ENCODE measurements at regions of chr4 and their contacts with region 1.

Region 1: DNA sequence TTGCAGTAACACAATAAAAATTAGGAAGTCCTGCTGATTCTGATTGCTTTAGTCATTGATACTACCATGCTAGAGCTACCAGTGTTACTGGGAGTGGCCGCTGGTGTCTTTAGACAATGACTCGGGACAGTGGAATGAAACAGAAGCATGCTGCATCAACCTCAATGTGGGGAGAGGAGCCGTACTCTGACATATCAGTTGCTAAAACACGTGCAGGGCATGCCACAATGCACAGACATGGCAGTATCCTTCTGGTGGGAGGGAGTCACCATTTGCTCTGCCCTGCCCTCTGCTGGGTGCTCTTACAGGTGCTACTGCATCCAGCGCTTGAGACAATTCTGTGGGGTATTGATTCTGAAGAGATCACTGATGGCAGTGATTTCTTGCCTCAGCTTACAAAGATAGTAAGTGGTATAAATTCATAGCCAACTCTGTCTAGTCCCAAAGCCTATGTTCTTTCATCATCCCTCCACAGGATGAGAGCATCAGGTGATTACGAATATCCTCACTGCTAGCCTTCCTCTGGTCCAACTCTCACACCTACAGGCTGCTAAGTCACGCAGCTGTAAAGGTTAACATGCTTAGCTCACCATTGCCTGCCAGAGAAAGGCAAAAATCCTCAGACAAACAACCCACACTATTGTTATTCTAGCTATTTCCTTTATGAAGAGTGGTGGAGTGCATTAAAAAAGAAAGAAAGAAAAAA is 43.7 kb downstream of the NSG1 start:
- DNase-seq: peak; percentile 73
- H3K4me3 Mint-ChIP-seq: no peak overlapping the region
- H3K27ac Mint-ChIP-seq: no peak overlapping the region
- H3K4me1 Mint-ChIP-seq: peaks cover 8% of the 10 kb centered on the region
- H3K27me3 Mint-ChIP-seq: no peaks in the 10 kb centered on the region
- CTCF ChIP-seq: peak; percentile 63

Region 2: DNA sequence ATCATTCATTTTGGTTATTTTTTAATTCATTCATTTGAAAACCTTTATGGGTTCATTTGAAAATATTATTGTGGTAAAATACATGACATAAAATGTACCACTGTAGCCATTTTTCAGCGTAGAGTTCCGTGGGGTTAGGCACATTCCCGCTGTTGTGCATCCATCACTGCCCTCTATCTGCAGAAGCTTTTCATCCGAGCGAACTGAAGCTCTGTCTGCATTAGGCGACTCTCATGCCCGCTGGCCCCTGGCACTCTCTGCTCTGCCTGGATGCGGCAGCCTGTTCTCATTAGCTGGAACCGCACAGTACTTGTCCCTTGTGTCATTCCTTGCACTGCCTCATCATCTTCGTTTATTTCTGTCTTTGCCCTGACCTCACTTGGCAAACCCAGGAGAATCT is 1994.3 kb before region 1 on chr4:
- CTCF ChIA-PET with region 1: no interaction called
- POLR2A ChIA-PET with region 1: no interaction called
- intact Hi-C with region 1: no loop called
- DNase-seq: no peak
- H3K4me3 Mint-ChIP-seq: no peak overlapping the region
- H3K27ac Mint-ChIP-seq: no peak overlapping the region
- H3K4me1 Mint-ChIP-seq: no peaks in the 10 kb centered on the region
- H3K27me3 Mint-ChIP-seq: peaks cover 15% of the 10 kb centered on the region
- CTCF ChIP-seq: no peak

Region 3: GRCh38 chr4:4260253-4260652 is 170.4 kb before region 1 on chr4:
- CTCF ChIA-PET with region 1: interaction called, 11 read pairs
- POLR2A ChIA-PET with region 1: no interaction called
- intact Hi-C with region 1: loop called (anchors 1 kb)
- DNase-seq: peak; percentile 67
- H3K4me3 Mint-ChIP-seq: no peak overlapping the region
- H3K27ac Mint-ChIP-seq: no peak overlapping the region
- H3K4me1 Mint-ChIP-seq: no peaks in the 10 kb centered on the region
- H3K27me3 Mint-ChIP-seq: no peaks in the 10 kb centered on the region
- CTCF ChIP-seq: peak; percentile 65

Region 4: GRCh38 chr4:4386736-4387392 is 43.8 kb before region 1 on chr4 and contains the start of gene NSG1:
- CTCF ChIA-PET with region 1: interaction called, 3 read pairs
- POLR2A ChIA-PET with region 1: no interaction called
- intact Hi-C with region 1: loop called (anchors 1 kb)
- DNase-seq: peak; percentile 32
- H3K4me3 Mint-ChIP-seq: peak within 1 kb of the TSS; percentile 78
- H3K27ac Mint-ChIP-seq: peak within 1 kb of the TSS; percentile 74
- H3K4me1 Mint-ChIP-seq: peaks cover 5% of the 10 kb centered on the region
- H3K27me3 Mint-ChIP-seq: peaks cover 21% of the 10 kb centered on the region
- CTCF ChIP-seq: no peak
- total RNA-seq, gene NSG1: 6.7 and 8.6 TPM in 2 replicates

Region 5: GRCh38 chr4:4420421-4420820 is 10.2 kb before region 1 on chr4:
- CTCF ChIA-PET with region 1: interaction called, 16 read pairs
- POLR2A ChIA-PET with region 1: no interaction called
- intact Hi-C with region 1: no loop called
- DNase-seq: no peak
- H3K4me3 Mint-ChIP-seq: no peak overlapping the region
- H3K27ac Mint-ChIP-seq: no peak overlapping the region
- H3K4me1 Mint-ChIP-seq: no peaks in the 10 kb centered on the region
- H3K27me3 Mint-ChIP-seq: no peaks in the 10 kb centered on the region
- CTCF ChIP-seq: no peak

Measured in MCF 10A (cell line).